Astrocyte of the cerebellum (primary cell): ENCODE measurements at regions of chr9 and their contacts with region 1.

Region 1: GRCh38 chr9:124537926-124538325 is 30.7 kb upstream of the NR5A1 start:
- DNase-seq: no peak
- H3K4me3 ChIP-seq: no peak overlapping the region
- CTCF ChIP-seq: no peak

Region 2: GRCh38 chr9:124415102-124415851 is 122.6 kb before region 1 on chr9 and contains the start of gene PSMB7:
- in situ Hi-C with region 1: loop called (anchors 5 kb)
- DNase-seq: peak; percentile 93
- H3K4me3 ChIP-seq: peak within 1 kb of the TSS; percentile 98
- CTCF ChIP-seq: peak; percentile 78

Region 3: DNA sequence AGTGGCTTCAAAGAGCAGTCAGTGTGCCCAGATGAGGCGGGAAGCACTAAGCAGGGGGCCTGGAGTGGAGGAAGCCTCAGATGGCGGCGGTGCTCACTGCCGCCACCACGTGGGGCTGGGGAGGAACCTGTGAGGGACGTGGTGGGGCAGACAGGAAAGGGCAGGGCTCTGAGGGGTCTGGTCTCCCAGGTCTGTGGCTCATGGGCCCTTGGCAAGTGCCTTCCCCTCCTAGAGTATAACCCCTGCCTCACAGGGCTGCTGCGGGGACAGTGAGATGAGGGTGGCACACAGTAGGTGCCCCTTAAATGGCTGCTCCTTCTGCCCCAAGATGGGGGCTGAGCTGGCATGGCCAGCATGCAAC is 57.3 kb before region 1 on chr9:
- in situ Hi-C with region 1: loop called (anchors 5 kb)
- DNase-seq: no peak
- H3K4me3 ChIP-seq: no peak overlapping the region
- CTCF ChIP-seq: peak; percentile 47